ENCODE measurements at regions of chr9 and their contacts with region 1.

Region 1: GRCh38 chr9:105608721-105609598 is 51.0 kb downstream of the FKTN start:
- DNase-seq: peak; percentile 69
- ATAC-seq: peak; percentile 60
- H3K4me3 ChIP-seq: no peak overlapping the region
- H3K4me3 Mint-ChIP-seq: no peak overlapping the region
- H3K27ac ChIP-seq: no peak overlapping the region
- H3K27ac Mint-ChIP-seq: peak overlapping the region; percentile 50
- H3K4me1 ChIP-seq: no peaks in the 10 kb centered on the region
- H3K4me1 Mint-ChIP-seq: peaks cover 3% of the 10 kb centered on the region
- H3K27me3 ChIP-seq: no peaks in the 10 kb centered on the region
- H3K27me3 Mint-ChIP-seq: no peaks in the 10 kb centered on the region
- CTCF ChIP-seq: peak; percentile 86

Region 2: GRCh38 chr9:105425841-105426436 is 183.0 kb before region 1 on chr9:
- CTCF ChIA-PET with region 1: no interaction called
- POLR2A ChIA-PET with region 1: no interaction called
- intact Hi-C with region 1: loop called (anchors 5 kb)
- DNase-seq: no peak
- ATAC-seq: no peak
- H3K4me3 ChIP-seq: no peak overlapping the region
- H3K4me3 Mint-ChIP-seq: no peak overlapping the region
- H3K27ac ChIP-seq: no peak overlapping the region
- H3K27ac Mint-ChIP-seq: no peak overlapping the region
- H3K4me1 ChIP-seq: no peaks in the 10 kb centered on the region
- H3K4me1 Mint-ChIP-seq: peaks cover 2% of the 10 kb centered on the region
- H3K27me3 ChIP-seq: no peaks in the 10 kb centered on the region
- H3K27me3 Mint-ChIP-seq: peaks cover 3% of the 10 kb centered on the region
- CTCF ChIP-seq: peak; percentile 41

Region 3: DNA sequence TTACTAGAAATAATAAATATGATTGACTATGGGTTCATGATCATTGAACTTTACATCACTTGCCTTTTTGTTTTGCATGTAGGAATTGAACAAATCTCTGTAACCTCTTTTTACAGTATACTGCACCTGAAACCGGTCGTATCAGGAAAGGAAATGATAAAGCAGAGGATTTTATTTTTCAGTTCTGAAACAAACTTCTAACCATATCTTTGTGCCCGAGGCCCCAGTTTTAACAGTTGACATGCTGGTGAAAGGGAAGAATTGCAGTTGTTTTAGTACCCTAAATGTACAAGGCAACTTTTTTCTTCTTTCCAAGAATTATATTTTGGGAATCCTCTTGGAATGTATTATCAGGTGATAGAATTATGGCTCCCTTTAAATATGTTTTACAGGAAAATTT is 113.1 kb after region 1 on chr9:
- CTCF ChIA-PET with region 1: interaction called, 49 read pairs
- POLR2A ChIA-PET with region 1: no interaction called
- intact Hi-C with region 1: loop called (anchors 1 kb)
- DNase-seq: no peak
- ATAC-seq: no peak
- H3K4me3 ChIP-seq: no peak overlapping the region
- H3K4me3 Mint-ChIP-seq: no peak overlapping the region
- H3K27ac ChIP-seq: no peak overlapping the region
- H3K27ac Mint-ChIP-seq: no peak overlapping the region
- H3K4me1 ChIP-seq: no peaks in the 10 kb centered on the region
- H3K4me1 Mint-ChIP-seq: no peaks in the 10 kb centered on the region
- H3K27me3 ChIP-seq: no peaks in the 10 kb centered on the region
- H3K27me3 Mint-ChIP-seq: no peaks in the 10 kb centered on the region
- CTCF ChIP-seq: no peak